ENCODE measurements at regions of chr6 and their contacts with region 1.

Region 1: GRCh38 chr6:28838634-28839442 is 84.9 kb downstream of the TRIM27 start:
- DNase-seq: peak; percentile 88
- H3K4me3 ChIP-seq: peak overlapping the region; percentile 88 to 97 (median 95)
- H3K27ac ChIP-seq: peak overlapping the region; percentile 21
- H3K4me1 ChIP-seq: peaks cover 6% of the 10 kb centered on the region
- H3K27me3 ChIP-seq: peaks cover 1 to 13% of the 10 kb centered on the region in 2 experiments
- CTCF ChIP-seq: peak; percentile 77 to 87
- POLR2A ChIP-seq: no peak

Region 2: GRCh38 chr6:28725890-28726348 is 112.9 kb before region 1 on chr6:
- CTCF ChIA-PET with region 1: no interaction called
- POLR2A ChIA-PET with region 1: no interaction called
- dilution Hi-C with region 1: no loop called
- intact Hi-C with region 1: loop called (anchors 2 kb)
- DNase-seq: no peak
- H3K4me3 ChIP-seq: no peak overlapping the region
- H3K27ac ChIP-seq: no peak overlapping the region
- H3K4me1 ChIP-seq: peaks cover 4% of the 10 kb centered on the region
- H3K27me3 ChIP-seq: peaks cover 9 to 12% of the 10 kb centered on the region in 2 experiments
- CTCF ChIP-seq: no peak
- POLR2A ChIP-seq: no peak

Region 3: GRCh38 chr6:28816909-28817807 is 21.7 kb before region 1 on chr6:
- CTCF ChIA-PET with region 1: interaction called, 9 read pairs
- POLR2A ChIA-PET with region 1: no interaction called
- dilution Hi-C with region 1: no loop called
- intact Hi-C with region 1: loop called (anchors 2 kb)
- DNase-seq: peak; percentile 26
- H3K4me3 ChIP-seq: peak overlapping the region in 1 of 3 experiments; percentile 30
- H3K27ac ChIP-seq: no peak overlapping the region
- H3K4me1 ChIP-seq: no peaks in the 10 kb centered on the region
- H3K27me3 ChIP-seq: peaks cover 55 to 57% of the 10 kb centered on the region in 2 experiments
- CTCF ChIP-seq: no peak
- POLR2A ChIP-seq: no peak

Region 4: GRCh38 chr6:28880894-28881780 is 42.3 kb after region 1 on chr6:
- CTCF ChIA-PET with region 1: interaction called, 7 read pairs
- POLR2A ChIA-PET with region 1: no interaction called
- dilution Hi-C with region 1: no loop called
- intact Hi-C with region 1: loop called (anchors 1 kb)
- DNase-seq: peak; percentile 84
- H3K4me3 ChIP-seq: peak overlapping the region; percentile 69 to 97 (median 86)
- H3K27ac ChIP-seq: no peak overlapping the region
- H3K4me1 ChIP-seq: peaks cover 2% of the 10 kb centered on the region
- H3K27me3 ChIP-seq: peaks cover 23 to 27% of the 10 kb centered on the region in 2 experiments
- CTCF ChIP-seq: no peak
- POLR2A ChIP-seq: no peak

Region 5: GRCh38 chr6:28940858-28941680 is 102.2 kb after region 1 on chr6:
- CTCF ChIA-PET with region 1: interaction called, 4 read pairs
- POLR2A ChIA-PET with region 1: no interaction called
- dilution Hi-C with region 1: no loop called
- intact Hi-C with region 1: loop called (anchors 1 kb)
- DNase-seq: peak; percentile 96
- H3K4me3 ChIP-seq: peak overlapping the region; percentile 46 to 89 (median 87)
- H3K27ac ChIP-seq: peak overlapping the region; percentile 67
- H3K4me1 ChIP-seq: peaks cover 11% of the 10 kb centered on the region
- H3K27me3 ChIP-seq: no peaks in the 10 kb centered on the region
- CTCF ChIP-seq: no peak
- POLR2A ChIP-seq: no peak

Region 6: DNA sequence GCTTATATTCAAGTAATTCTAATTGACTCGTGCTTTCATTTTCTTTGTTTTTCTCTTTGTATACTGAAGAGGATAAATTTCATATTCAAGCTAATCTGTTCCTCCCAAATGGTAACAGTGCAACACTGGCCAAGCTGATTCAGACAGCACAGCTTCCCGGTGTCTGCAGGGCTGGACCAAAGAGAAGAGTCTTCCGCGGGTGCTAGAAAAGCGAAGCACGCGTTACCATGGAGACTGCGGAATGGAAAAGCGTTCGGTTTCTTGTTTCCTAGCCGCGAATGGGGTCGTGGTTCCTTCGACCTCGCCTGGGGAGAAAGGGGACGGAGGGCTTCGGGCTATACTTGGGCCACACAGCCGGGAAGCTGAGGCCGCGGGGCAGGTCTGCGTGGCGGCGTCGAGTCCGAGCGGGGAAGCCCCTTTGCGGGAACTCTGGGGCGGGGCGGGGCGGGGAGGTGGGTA is 172.5 kb after region 1 on chr6:
- CTCF ChIA-PET with region 1: interaction called, 100 read pairs
- POLR2A ChIA-PET with region 1: no interaction called
- dilution Hi-C with region 1: no loop called
- intact Hi-C with region 1: no loop called
- DNase-seq: peak; percentile 53
- H3K4me3 ChIP-seq: peak overlapping the region; percentile 45 to 80 (median 78)
- H3K27ac ChIP-seq: no peak overlapping the region
- H3K4me1 ChIP-seq: peaks cover 6% of the 10 kb centered on the region
- H3K27me3 ChIP-seq: peaks cover 3 to 14% of the 10 kb centered on the region in 2 experiments
- CTCF ChIP-seq: no peak
- POLR2A ChIP-seq: no peak

Measured in endothelial cell of umbilical vein (primary cell).